ENCODE measurements at regions of chr1 and their contacts with region 1.

Region 1: GRCh38 chr1:9455487-9456234 is 83.6 kb upstream of the SLC25A33 start:
- DNase-seq: peak; percentile 54 to 94
- H3K4me3 ChIP-seq: no peak overlapping the region
- H3K27ac ChIP-seq: no peak overlapping the region
- H3K4me1 ChIP-seq: no peaks in the 10 kb centered on the region; a peak in 1 of 7 replicates
- H3K27me3 ChIP-seq: peaks cover 0 to 3% (median 0%) of the 10 kb centered on the region in 4 experiments; a peak in 1 of 7 replicates
- CTCF ChIP-seq: peak; percentile 92 to 98 (median 97)
- EP300 ChIP-seq: no peak
- POLR2A ChIP-seq: no peak
- RAD21 ChIP-seq: peak; percentile 97 to 98

Region 2: DNA sequence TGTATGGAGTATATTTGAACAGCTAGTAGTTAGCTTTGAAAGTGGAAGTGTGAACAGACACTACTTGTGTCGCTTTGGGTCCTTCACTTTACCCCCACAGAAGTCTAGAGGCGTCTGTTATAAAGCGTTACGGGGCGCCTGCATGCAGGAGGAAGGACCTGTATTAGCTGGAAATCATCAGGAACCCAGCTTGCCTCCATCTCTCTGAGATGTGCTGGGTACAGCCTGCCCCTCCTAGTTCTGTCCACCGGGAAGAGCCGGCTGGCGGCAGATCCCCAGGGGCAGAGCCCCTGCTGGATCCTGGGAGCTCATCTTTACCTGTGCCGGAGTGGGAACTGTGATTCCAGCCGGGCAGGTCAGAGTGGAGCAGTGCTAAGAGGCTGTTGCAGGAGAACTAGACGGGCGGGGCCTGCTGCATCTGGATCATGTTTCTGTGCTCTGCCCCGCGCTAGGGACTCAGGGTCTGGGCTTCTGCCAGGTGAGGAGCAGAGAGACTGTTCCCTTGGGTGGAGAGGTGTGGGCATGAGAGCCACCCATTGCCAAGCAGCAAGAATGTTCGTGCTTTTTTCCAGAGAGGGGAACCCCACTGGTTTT is 185.3 kb before region 1 on chr1:
- CTCF ChIA-PET with region 1: interaction called, 33 read pairs
- POLR2A ChIA-PET with region 1: no interaction called
- DNase-seq: peak in 1 of 2 experiments; percentile 53
- H3K4me3 ChIP-seq: no peak overlapping the region
- H3K27ac ChIP-seq: no peak overlapping the region
- H3K4me1 ChIP-seq: peaks cover 0 to 4% (median 1%) of the 10 kb centered on the region in 4 experiments; a peak in 5 of 7 replicates
- H3K27me3 ChIP-seq: no peaks in the 10 kb centered on the region; a peak in 1 of 7 replicates
- CTCF ChIP-seq: no peak
- EP300 ChIP-seq: no peak
- POLR2A ChIP-seq: no peak
- RAD21 ChIP-seq: no peak

Region 3: GRCh38 chr1:9321480-9321849 is 134.2 kb before region 1 on chr1:
- CTCF ChIA-PET with region 1: interaction called, 10 read pairs
- POLR2A ChIA-PET with region 1: no interaction called
- DNase-seq: no peak
- H3K4me3 ChIP-seq: no peak overlapping the region
- H3K27ac ChIP-seq: no peak overlapping the region
- H3K4me1 ChIP-seq: peaks cover 12 to 37% (median 26%) of the 10 kb centered on the region in 4 experiments
- H3K27me3 ChIP-seq: peaks cover 0 to 2% (median 0%) of the 10 kb centered on the region in 4 experiments; a peak in 1 of 7 replicates
- CTCF ChIP-seq: no peak
- EP300 ChIP-seq: no peak
- POLR2A ChIP-seq: no peak
- RAD21 ChIP-seq: no peak

Region 4: DNA sequence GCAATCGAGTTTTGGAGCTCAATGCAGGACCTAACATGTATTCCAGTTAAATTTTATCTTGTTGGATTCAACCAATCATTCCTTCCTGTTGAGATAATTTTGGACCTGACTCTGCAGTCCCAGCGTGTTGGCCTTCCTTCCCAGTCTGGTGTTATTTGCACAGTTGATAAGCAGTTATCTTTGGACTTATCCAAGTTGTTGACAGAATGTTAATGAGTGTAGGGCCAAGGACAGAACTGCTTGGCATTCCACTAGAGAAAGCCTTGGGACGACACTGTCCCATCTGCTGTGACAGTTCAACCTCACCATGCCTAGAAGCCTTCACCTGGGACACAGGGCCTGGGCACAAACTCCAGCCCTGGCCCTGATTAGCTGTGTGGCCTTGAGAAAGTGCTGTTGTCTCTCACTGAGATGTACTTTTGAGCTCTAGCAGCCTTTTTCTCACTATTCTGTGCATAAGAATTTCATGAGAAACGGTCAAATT is 20.5 kb before region 1 on chr1:
- CTCF ChIA-PET with region 1: interaction called, 14 read pairs
- POLR2A ChIA-PET with region 1: no interaction called
- DNase-seq: no peak
- H3K4me3 ChIP-seq: no peak overlapping the region
- H3K27ac ChIP-seq: no peak overlapping the region
- H3K4me1 ChIP-seq: peaks cover 0 to 8% (median 2%) of the 10 kb centered on the region in 4 experiments; a peak in 2 of 7 replicates
- H3K27me3 ChIP-seq: no peaks in the 10 kb centered on the region
- CTCF ChIP-seq: no peak
- EP300 ChIP-seq: no peak
- POLR2A ChIP-seq: no peak
- RAD21 ChIP-seq: no peak

Region 5: DNA sequence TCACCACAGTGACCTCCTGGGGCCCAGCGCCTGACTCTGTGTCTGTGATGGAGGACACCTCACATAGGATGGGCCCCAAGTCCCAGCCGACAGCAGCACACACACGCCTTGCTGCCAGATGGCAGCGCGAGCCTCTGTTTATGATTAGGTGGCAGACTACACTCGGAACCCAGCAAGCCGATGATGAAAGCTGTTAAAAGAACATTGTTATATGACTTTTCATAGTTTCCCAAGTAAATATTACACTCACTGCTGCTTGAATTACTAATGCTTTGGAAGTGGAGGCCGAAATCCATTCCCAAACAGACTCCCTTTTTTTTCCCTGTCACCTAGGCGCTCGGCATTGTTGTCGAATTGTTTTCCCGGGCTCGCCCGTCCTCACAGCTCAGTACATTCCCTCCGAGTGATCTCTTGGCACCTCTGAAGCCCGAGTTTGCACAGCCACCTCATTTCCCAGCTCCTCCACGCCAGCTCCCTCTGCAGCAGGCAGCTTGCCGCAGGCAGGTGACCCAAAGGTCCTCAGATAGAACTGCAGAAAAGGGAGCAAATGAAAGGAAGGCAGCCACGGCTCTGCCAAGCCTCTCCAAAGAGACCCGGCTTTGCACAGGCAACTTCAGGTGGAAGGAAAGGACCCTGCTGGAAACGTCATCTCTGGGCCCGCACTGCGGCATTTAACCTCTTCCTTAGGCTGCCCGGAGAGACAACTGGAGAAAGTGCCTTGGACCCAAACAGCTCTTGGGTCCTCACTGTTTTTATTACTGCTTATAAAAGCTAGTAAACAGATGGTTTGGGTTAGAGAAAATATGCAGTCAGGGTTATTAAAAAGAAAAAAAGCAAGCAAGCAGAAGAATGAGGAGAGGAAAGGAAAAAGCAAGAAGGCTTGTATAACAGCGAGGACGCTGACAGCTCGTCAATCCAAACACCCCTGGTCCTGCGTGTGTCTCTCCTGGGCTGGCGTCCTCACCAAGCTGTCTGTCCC is 11.4 kb after region 1 on chr1:
- CTCF ChIA-PET with region 1: interaction called, 22 read pairs
- POLR2A ChIA-PET with region 1: no interaction called
- DNase-seq: no peak
- H3K4me3 ChIP-seq: no peak overlapping the region
- H3K27ac ChIP-seq: no peak overlapping the region
- H3K4me1 ChIP-seq: no peaks in the 10 kb centered on the region
- H3K27me3 ChIP-seq: no peaks in the 10 kb centered on the region
- CTCF ChIP-seq: no peak
- EP300 ChIP-seq: no peak
- POLR2A ChIP-seq: no peak
- RAD21 ChIP-seq: no peak

Region 6: DNA sequence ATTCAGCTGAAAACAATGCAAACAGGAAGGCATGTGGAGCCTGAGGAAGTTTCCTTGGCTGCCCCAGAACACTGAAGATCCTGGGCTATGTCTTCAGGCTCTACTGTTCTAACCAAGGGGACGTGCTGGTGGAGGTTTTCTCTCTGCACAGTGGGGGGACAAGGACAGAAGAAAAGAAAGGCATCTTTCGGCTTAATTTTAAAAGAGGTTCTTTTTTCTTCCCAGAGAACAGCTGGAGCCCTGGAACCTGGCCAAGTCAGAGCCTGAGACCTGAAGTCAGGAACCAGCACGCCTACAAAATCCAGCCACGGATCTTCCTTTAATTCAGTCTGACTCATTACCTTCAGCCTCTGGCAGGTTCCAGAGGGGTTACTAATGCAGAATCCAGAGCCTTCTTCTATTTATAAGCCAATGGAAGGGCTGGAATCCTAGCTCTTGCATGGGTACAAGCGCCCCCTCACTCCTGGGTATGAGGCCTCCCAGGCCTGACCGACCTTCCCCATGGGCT is 434.6 kb after region 1 on chr1:
- CTCF ChIA-PET with region 1: no interaction called
- POLR2A ChIA-PET with region 1: no interaction called
- DNase-seq: no peak
- H3K4me3 ChIP-seq: no peak overlapping the region
- H3K27ac ChIP-seq: 0 out of 2 replicates have a peak overlapping the region, but pooled peaks have one; percentile 31
- H3K4me1 ChIP-seq: peaks cover 5 to 18% (median 14%) of the 10 kb centered on the region in 4 experiments
- H3K27me3 ChIP-seq: no peaks in the 10 kb centered on the region
- CTCF ChIP-seq: no peak
- EP300 ChIP-seq: no peak
- POLR2A ChIP-seq: no peak
- RAD21 ChIP-seq: no peak

Measured in H1 (cell line).